ENCODE measurements at regions of chr11 and their contacts with region 1.

Region 1: GRCh38 chr11:62905927-62906531 is 15.1 kb downstream of the CHRM1 start:
- DNase-seq: peak; percentile 87
- H3K4me3 Mint-ChIP-seq: no peak overlapping the region
- H3K27ac Mint-ChIP-seq: no peak overlapping the region
- H3K4me1 Mint-ChIP-seq: peaks cover 24% of the 10 kb centered on the region
- H3K27me3 Mint-ChIP-seq: peaks cover 8% of the 10 kb centered on the region

Region 2: GRCh38 chr11:62847767-62848314 is 58.2 kb before region 1 on chr11:
- CTCF ChIA-PET with region 1: no interaction called
- POLR2A ChIA-PET with region 1: no interaction called
- intact Hi-C with region 1: no loop called
- DNase-seq: no peak
- H3K4me3 Mint-ChIP-seq: no peak overlapping the region
- H3K27ac Mint-ChIP-seq: no peak overlapping the region
- H3K4me1 Mint-ChIP-seq: peaks cover 14% of the 10 kb centered on the region
- H3K27me3 Mint-ChIP-seq: no peaks in the 10 kb centered on the region

Region 3: GRCh38 chr11:62931499-62932278 is 25.7 kb after region 1 on chr11:
- CTCF ChIA-PET with region 1: interaction called, 18 read pairs
- POLR2A ChIA-PET with region 1: no interaction called
- intact Hi-C with region 1: no loop called
- DNase-seq: no peak
- H3K4me3 Mint-ChIP-seq: no peak overlapping the region
- H3K27ac Mint-ChIP-seq: no peak overlapping the region
- H3K4me1 Mint-ChIP-seq: no peaks in the 10 kb centered on the region
- H3K27me3 Mint-ChIP-seq: peaks cover 32% of the 10 kb centered on the region

Region 4: DNA sequence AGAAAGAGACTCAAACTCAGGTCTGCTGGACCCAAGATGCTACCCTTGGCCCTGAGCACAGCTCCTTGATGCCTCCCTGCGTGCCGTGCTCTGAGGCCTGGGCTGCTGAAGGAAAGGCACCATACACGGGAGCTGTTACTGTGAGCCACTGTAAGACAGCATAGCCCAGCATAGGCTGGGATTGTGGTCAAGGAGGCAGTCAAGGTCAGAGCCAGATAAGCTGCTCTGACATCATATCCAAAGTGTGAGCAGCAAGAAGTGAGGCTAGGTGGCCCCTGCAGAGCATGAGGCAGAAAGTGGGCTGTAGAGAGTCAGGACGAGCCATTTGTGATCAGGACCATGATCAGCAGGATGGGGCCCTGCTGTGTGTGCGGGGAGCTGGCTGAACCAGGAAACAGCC is 101.9 kb after region 1 on chr11:
- CTCF ChIA-PET with region 1: interaction called, 17 read pairs
- POLR2A ChIA-PET with region 1: no interaction called
- intact Hi-C with region 1: no loop called
- DNase-seq: no peak
- H3K4me3 Mint-ChIP-seq: no peak overlapping the region
- H3K27ac Mint-ChIP-seq: no peak overlapping the region
- H3K4me1 Mint-ChIP-seq: no peaks in the 10 kb centered on the region
- H3K27me3 Mint-ChIP-seq: no peaks in the 10 kb centered on the region

Region 5: GRCh38 chr11:63032457-63032856 is 126.4 kb after region 1 on chr11:
- CTCF ChIA-PET with region 1: interaction called, 48 read pairs
- POLR2A ChIA-PET with region 1: no interaction called
- intact Hi-C with region 1: no loop called
- DNase-seq: no peak
- H3K4me3 Mint-ChIP-seq: no peak overlapping the region
- H3K27ac Mint-ChIP-seq: no peak overlapping the region
- H3K4me1 Mint-ChIP-seq: peaks cover 2% of the 10 kb centered on the region
- H3K27me3 Mint-ChIP-seq: peaks cover 22% of the 10 kb centered on the region

Measured in activated CD4-positive, alpha-beta memory T cell treated with anti-CD3 and anti-CD28 coated beads for 36 hours (primary cell).